SK-N-SH (cell line): ENCODE measurements at regions of chr10 and their contacts with region 1.

Region 1: DNA sequence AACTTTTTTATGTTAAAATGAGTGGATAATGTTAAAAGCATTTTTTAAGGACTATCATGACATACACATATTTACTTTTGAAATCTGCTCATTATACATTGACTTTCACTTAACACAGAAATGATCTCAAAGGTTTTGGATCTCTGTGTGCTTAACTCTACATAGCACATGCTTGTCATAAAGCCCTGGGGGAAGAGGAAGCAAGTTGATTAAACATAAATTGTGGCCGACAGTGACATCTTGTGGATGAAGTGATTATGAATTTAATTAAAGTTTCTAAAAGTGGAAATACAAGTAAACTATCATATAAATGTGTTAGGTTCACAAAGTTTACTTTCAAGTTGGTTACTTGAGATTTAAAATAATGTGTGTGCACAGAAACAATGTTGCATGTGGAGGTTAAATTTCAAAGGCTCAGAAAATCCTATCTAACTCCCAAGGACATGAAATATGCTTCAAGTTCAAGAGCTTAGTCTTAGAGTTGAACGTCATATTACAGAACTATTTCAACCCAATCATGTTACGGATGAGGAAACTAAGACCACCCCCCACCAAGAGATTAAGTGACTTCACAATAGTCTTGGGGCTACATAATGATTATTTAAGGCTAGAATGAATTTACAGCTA is 1247.7 kb downstream of the GATA3 start:
- DNase-seq: no peak
- H3K4me3 ChIP-seq: no peak overlapping the region
- H3K27ac ChIP-seq: no peak overlapping the region; a peak in 1 of 4 replicates
- H3K4me1 ChIP-seq: peaks cover 0 to 17% of the 10 kb centered on the region in 2 experiments; a peak in 2 of 4 replicates
- H3K27me3 ChIP-seq: no peaks in the 10 kb centered on the region
- CTCF ChIP-seq: peak; percentile 67
- EP300 ChIP-seq: no peak
- RAD21 ChIP-seq: peak; percentile 81

Region 2: GRCh38 chr10:7874864-7875263 is 1427.4 kb before region 1 on chr10:
- CTCF ChIA-PET with region 1: interaction called, 12 read pairs
- POLR2A ChIA-PET with region 1: interaction called, 4 read pairs
- DNase-seq: no peak
- H3K4me3 ChIP-seq: no peak overlapping the region
- H3K27ac ChIP-seq: no peak overlapping the region
- H3K4me1 ChIP-seq: peaks cover 4 to 7% of the 10 kb centered on the region in 2 experiments; a peak in 2 of 4 replicates
- H3K27me3 ChIP-seq: no peaks in the 10 kb centered on the region
- CTCF ChIP-seq: no peak
- EP300 ChIP-seq: no peak
- RAD21 ChIP-seq: no peak

Region 3: DNA sequence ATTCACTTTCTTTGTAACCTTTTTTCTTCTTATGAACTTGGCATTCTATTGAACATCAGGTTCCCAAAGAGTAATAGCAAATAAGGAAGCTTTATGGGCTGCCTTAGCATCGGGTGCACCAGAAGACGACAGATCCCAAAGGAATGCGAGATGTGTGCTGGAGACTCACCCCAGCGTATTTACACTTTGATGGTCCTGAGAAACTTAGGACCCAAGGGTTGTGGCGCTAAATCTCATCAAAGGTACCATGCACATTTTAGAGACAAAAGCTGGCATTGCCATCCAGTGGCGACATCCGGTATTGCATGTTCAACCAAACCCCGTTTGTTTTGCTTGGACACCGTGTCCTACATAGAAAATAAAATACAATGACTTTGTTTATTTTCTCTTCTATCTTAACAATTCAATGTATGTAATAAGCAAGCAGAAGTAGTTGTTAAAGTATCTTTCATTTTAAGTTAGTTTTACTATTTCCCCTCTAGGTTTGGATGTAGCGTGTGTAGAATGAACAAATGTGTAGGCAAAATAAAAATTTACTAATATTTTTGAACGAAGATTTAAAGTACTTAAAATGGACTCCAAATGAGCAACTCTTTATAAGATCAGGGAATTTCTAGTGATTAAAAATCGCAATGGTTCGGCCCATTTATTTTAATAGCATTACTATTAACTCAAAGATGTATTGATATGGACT is 93.0 kb before region 1 on chr10:
- CTCF ChIA-PET with region 1: interaction called, 14 read pairs
- POLR2A ChIA-PET with region 1: no interaction called
- DNase-seq: peak; percentile 63
- H3K4me3 ChIP-seq: no peak overlapping the region; a peak in 1 of 4 replicates
- H3K27ac ChIP-seq: peak overlapping the region in 1 of 2 experiments; percentile 68; a peak in 1 of 4 replicates
- H3K4me1 ChIP-seq: peaks cover 0 to 7% of the 10 kb centered on the region in 2 experiments; a peak in 2 of 4 replicates
- H3K27me3 ChIP-seq: no peaks in the 10 kb centered on the region
- CTCF ChIP-seq: peak; percentile 88
- EP300 ChIP-seq: no peak
- RAD21 ChIP-seq: peak; percentile 98

Region 4: GRCh38 chr10:9262776-9263175 is 39.5 kb before region 1 on chr10:
- CTCF ChIA-PET with region 1: no interaction called
- POLR2A ChIA-PET with region 1: no interaction called
- DNase-seq: no peak
- H3K4me3 ChIP-seq: no peak overlapping the region
- H3K27ac ChIP-seq: peak overlapping the region in 1 of 2 experiments; percentile 16; a peak in 2 of 4 replicates
- H3K4me1 ChIP-seq: peaks cover 0 to 4% of the 10 kb centered on the region in 2 experiments; a peak in 1 of 4 replicates
- H3K27me3 ChIP-seq: no peaks in the 10 kb centered on the region
- CTCF ChIP-seq: no peak
- EP300 ChIP-seq: no peak
- RAD21 ChIP-seq: no peak